PC-9 (cell line): ENCODE measurements at regions of chr10 and their contacts with region 1.

Region 1: GRCh38 chr10:125160856-125161706 is 718 bp upstream of the CTBP2 start:
- DNase-seq: peak; percentile 71 to 78
- H3K4me3 ChIP-seq: peak overlapping the region; percentile 72
- H3K27ac ChIP-seq: peak overlapping the region; percentile 95
- H3K4me1 ChIP-seq: peaks cover 24% of the 10 kb centered on the region
- H3K27me3 ChIP-seq: no peaks in the 10 kb centered on the region
- CTCF ChIP-seq: peak; percentile 55; the same call in 1 of the 2 replicates

Region 2: DNA sequence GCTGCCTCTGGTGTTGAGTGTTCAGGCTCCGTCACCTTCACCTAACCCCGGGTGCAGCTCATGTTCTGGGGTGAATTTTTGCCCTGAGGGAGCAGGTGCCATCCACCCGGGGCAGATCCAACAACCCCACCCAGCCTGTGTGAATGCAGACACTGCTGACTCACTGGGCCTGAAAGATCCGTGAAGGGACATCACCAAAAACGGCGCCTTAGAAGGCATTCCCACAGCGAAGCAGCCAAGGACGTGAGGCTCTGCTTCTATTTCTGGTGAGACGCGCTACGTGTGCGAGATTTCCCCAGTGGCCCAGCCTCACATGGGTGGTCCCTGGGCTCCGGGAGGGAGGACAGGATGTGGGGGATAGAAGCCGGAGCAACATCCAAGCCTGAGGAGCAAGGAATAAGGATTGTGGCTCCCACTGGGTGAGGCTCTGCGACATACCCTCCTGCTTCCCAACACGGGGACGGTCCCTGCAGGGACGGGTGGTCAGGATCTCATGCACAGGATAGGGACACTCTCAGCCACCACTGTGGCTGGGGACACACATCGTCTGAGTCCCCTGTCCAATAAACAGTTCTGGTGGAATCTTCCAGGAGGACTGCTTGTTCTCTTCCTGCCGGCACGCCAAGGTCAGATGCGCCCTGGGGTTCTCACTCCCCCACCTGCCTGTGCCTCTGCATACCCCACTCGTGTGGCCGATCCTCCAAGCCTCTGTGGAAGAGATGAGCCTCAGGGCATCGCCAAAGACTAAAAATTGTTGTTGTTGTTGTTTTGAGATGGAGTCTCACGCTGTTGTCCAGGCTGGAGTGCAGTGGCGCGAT is 149.0 kb before region 1 on chr10:
- CTCF ChIA-PET with region 1: interaction called, 19 read pairs
- POLR2A ChIA-PET with region 1: no interaction called
- intact Hi-C with region 1: no loop called
- DNase-seq: no peak
- H3K4me3 ChIP-seq: no peak overlapping the region
- H3K27ac ChIP-seq: no peak overlapping the region
- H3K4me1 ChIP-seq: no peaks in the 10 kb centered on the region
- H3K27me3 ChIP-seq: no peaks in the 10 kb centered on the region
- CTCF ChIP-seq: no peak

Region 3: DNA sequence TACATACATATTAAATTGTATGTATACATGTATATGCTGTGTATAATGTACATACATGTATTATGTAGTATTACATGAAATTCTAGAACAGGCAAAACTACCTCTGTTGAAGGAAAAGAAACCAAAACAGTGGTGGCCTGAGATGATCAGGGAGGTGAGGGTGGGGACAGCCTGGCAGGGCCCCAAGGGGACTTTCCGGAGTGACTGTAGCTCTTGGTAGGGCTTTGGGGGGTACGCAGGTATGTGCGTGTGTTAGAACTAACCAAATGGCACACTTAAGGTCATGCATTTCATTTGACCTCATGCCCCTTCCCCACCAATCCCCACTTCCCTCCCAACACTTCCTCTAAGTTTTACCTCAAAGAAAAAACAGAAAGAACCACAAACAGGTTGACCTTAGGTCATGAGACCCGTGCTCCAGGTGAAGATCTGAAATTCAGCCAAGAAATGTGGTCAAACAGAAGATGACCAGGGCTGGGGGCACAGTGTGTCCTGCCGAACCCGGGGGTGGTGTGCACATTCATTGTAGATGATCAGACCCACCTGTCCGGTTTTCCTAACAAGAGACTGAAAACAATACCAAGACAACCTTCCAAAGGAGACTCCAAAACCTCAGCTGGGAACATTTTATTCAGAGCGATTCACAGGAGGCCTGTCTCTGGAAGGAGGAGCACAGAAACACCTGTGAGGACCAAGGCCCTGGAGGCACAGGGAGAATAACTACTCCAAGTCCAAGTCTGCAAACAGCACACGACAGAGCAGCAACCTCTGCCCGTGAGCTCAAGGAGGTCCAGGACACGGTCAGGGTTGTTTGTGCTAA is 31.8 kb before region 1 on chr10:
- CTCF ChIA-PET with region 1: no interaction called
- POLR2A ChIA-PET with region 1: interaction called, 14 read pairs
- intact Hi-C with region 1: loop called (anchors 5 kb)
- DNase-seq: peak in 1 of 2 experiments; percentile 50
- H3K4me3 ChIP-seq: no peak overlapping the region
- H3K27ac ChIP-seq: no peak overlapping the region
- H3K4me1 ChIP-seq: peaks cover under 1% of the 10 kb centered on the region; the same call in 1 of the 2 replicates
- H3K27me3 ChIP-seq: no peaks in the 10 kb centered on the region
- CTCF ChIP-seq: no peak

Region 4: GRCh38 chr10:125263555-125263954 is 102.5 kb after region 1 on chr10:
- CTCF ChIA-PET with region 1: no interaction called
- POLR2A ChIA-PET with region 1: no interaction called
- intact Hi-C with region 1: loop called (anchors 2 kb)
- DNase-seq: peak; percentile 67 to 91
- H3K4me3 ChIP-seq: peak overlapping the region; percentile 38; the same call in 1 of the 2 replicates
- H3K27ac ChIP-seq: peak overlapping the region; percentile 92
- H3K4me1 ChIP-seq: peaks cover 42% of the 10 kb centered on the region
- H3K27me3 ChIP-seq: no peaks in the 10 kb centered on the region
- CTCF ChIP-seq: no peak

Region 5: DNA sequence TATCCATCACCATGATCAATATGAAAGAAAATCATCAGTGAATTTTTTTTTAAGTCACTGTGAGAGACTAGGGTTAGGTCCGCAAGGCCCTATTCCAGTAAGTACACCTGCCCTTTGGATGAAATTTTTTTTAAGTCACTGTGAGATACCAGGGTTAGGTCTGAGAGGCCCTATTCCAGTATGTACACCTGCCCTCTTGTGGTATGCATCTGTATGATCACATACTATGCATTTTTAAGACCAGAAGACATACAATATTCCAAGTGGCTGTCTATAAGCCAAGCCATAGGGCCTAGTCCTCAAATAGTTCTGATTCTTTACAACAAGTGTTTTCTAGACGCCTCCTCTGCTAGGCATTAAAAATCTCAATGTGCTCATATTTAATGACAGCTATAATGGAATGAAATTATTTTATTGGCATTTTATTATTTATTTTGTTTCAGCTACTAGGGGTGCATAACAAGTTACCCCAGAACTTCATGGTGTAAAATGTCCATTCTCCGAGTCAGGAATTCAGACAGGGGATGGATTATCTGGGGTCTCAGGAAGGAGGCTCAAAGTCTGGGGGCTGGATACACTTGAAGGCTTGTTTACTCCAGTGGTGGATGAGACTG is 468.8 kb after region 1 on chr10:
- CTCF ChIA-PET with region 1: no interaction called
- POLR2A ChIA-PET with region 1: no interaction called
- intact Hi-C with region 1: loop called (anchors 2 kb)
- DNase-seq: peak; percentile 4 to 65
- H3K4me3 ChIP-seq: no peak overlapping the region
- H3K27ac ChIP-seq: no peak overlapping the region
- H3K4me1 ChIP-seq: no peaks in the 10 kb centered on the region
- H3K27me3 ChIP-seq: no peaks in the 10 kb centered on the region
- CTCF ChIP-seq: peak; percentile 74

Region 6: GRCh38 chr10:125700355-125700911 is 539.4 kb after region 1 on chr10:
- CTCF ChIA-PET with region 1: no interaction called
- POLR2A ChIA-PET with region 1: interaction called, 10 read pairs
- intact Hi-C with region 1: no loop called
- DNase-seq: peak in 1 of 2 experiments; percentile 45
- H3K4me3 ChIP-seq: no peak overlapping the region
- H3K27ac ChIP-seq: no peak overlapping the region
- H3K4me1 ChIP-seq: peaks cover 2% of the 10 kb centered on the region; the same call in 1 of the 2 replicates
- H3K27me3 ChIP-seq: no peaks in the 10 kb centered on the region
- CTCF ChIP-seq: peak; percentile 53; the same call in 1 of the 2 replicates

Region 7: DNA sequence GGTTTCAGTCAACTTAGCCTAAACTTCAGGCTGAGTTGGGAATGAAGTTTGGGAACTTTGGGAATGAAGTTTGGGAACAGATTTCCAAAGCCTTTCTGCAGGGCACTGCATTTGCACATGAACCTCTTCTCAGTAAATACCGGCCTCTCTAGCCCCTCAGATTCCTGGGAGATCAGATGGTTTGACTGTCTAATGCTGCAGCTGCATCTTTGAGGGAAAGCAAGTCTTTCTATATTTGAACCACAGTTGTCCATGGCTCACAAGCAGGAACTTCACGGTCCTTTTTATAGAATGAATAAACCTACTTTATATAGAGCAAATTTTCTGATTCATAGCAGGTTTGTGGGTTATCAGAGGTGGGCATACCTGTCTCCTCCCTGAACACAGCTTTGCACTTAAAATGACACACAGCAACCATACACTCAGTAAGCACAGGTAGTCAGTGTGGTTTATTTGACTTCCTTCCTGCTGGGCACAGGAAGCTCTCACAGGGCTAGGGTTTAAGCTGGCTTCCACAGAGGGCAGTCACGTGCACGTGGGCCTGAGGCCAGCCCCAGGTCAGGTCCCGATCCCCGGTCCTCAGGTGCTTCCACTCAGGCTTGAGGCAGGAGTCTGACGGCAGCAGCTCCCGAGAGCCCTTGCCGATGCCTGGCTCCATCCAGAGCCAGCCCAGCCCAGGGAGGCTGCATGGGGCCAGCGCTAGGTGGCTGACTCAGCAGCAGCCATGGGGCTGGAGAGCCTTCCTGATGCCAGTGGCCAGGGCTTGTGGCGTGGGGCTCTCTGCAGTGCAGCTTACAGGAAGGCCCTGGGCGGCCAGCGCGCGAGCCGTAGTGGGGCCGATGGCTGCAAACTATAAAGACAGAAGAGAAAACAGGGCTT is 627.3 kb after region 1 on chr10:
- CTCF ChIA-PET with region 1: no interaction called
- POLR2A ChIA-PET with region 1: no interaction called
- intact Hi-C with region 1: no loop called
- DNase-seq: no peak
- H3K4me3 ChIP-seq: no peak overlapping the region
- H3K27ac ChIP-seq: no peak overlapping the region
- H3K4me1 ChIP-seq: no peaks in the 10 kb centered on the region
- H3K27me3 ChIP-seq: no peaks in the 10 kb centered on the region
- CTCF ChIP-seq: no peak